ENCODE measurements at regions of chr6 and their contacts with region 1.

Region 1: GRCh38 chr6:157614026-157614568 is 208.9 kb upstream of the SNX9 start:
- DNase-seq: peak; percentile 65
- ATAC-seq: peak; percentile 64
- H3K4me3 ChIP-seq: no peak overlapping the region
- H3K4me3 Mint-ChIP-seq: peak overlapping the region; percentile 67
- H3K27ac ChIP-seq: peak overlapping the region; percentile 57 to 68
- H3K27ac Mint-ChIP-seq: peak overlapping the region; percentile 83
- H3K4me1 ChIP-seq: peaks cover 36 to 67% of the 10 kb centered on the region in 2 donors
- H3K4me1 Mint-ChIP-seq: peaks cover 59% of the 10 kb centered on the region
- H3K27me3 ChIP-seq: no peaks in the 10 kb centered on the region
- H3K27me3 Mint-ChIP-seq: no peaks in the 10 kb centered on the region
- CTCF ChIP-seq: no peak

Region 2: GRCh38 chr6:156589281-156589680 is 1024.8 kb before region 1 on chr6:
- CTCF ChIA-PET with region 1: no interaction called
- POLR2A ChIA-PET with region 1: no interaction called
- intact Hi-C with region 1: no loop called
- DNase-seq: no peak
- ATAC-seq: no peak
- H3K4me3 ChIP-seq: no peak overlapping the region
- H3K4me3 Mint-ChIP-seq: no peak overlapping the region
- H3K27ac ChIP-seq: no peak overlapping the region
- H3K27ac Mint-ChIP-seq: no peak overlapping the region
- H3K4me1 ChIP-seq: no peaks in the 10 kb centered on the region
- H3K4me1 Mint-ChIP-seq: peaks cover 2% of the 10 kb centered on the region
- H3K27me3 ChIP-seq: no peaks in the 10 kb centered on the region
- H3K27me3 Mint-ChIP-seq: peaks cover 7% of the 10 kb centered on the region
- CTCF ChIP-seq: no peak

Region 3: DNA sequence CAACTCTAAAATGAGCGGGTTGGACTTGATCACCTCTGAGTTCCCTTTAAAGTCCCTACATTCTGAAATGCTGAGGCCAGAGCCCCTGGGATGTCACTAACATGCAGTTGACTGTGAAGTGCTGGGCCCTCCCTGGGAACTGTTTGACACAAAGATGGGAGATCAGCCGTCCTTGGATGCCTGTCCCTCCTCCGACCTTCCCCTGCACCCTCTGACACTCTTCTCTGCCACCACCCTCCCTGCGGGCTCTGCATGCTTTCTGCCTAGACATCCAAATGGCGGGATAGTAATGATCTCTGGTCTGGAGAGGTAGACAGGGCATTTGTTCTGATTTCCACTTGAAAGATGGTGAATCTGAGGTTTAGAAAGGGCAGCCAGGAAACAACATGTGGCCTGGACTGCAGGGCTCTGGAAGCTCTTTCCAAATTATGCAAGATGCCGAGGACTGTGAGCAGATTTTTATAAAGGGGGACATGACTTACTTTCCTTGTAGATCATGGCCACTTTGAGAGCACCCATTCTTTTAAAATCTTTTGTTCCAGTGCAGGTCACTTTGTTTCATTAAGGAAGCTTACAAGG is 119.9 kb before region 1 on chr6:
- CTCF ChIA-PET with region 1: no interaction called
- POLR2A ChIA-PET with region 1: no interaction called
- intact Hi-C with region 1: no loop called
- DNase-seq: no peak
- ATAC-seq: no peak
- H3K4me3 ChIP-seq: no peak overlapping the region
- H3K4me3 Mint-ChIP-seq: no peak overlapping the region
- H3K27ac ChIP-seq: no peak overlapping the region
- H3K27ac Mint-ChIP-seq: no peak overlapping the region
- H3K4me1 ChIP-seq: peaks cover 13 to 41% of the 10 kb centered on the region in 2 donors
- H3K4me1 Mint-ChIP-seq: peaks cover 38% of the 10 kb centered on the region
- H3K27me3 ChIP-seq: no peaks in the 10 kb centered on the region
- H3K27me3 Mint-ChIP-seq: peaks cover 5% of the 10 kb centered on the region
- CTCF ChIP-seq: no peak

Region 4: GRCh38 chr6:157597446-157598312 is 16.4 kb before region 1 on chr6:
- CTCF ChIA-PET with region 1: interaction called, 7 read pairs
- POLR2A ChIA-PET with region 1: interaction called, 5 read pairs
- intact Hi-C with region 1: loop called (anchors 2 kb)
- DNase-seq: peak; percentile 53
- ATAC-seq: peak; percentile 69
- H3K4me3 ChIP-seq: no peak overlapping the region
- H3K4me3 Mint-ChIP-seq: peak overlapping the region; percentile 7
- H3K27ac ChIP-seq: no peak overlapping the region
- H3K27ac Mint-ChIP-seq: peak overlapping the region; percentile 81
- H3K4me1 ChIP-seq: peaks cover 31 to 52% of the 10 kb centered on the region in 2 donors
- H3K4me1 Mint-ChIP-seq: peaks cover 50% of the 10 kb centered on the region
- H3K27me3 ChIP-seq: no peaks in the 10 kb centered on the region
- H3K27me3 Mint-ChIP-seq: no peaks in the 10 kb centered on the region
- CTCF ChIP-seq: peak; percentile 48

Measured in B cell (primary cell).